ENCODE measurements at regions of chr2 and their contacts with region 1.

Region 1: GRCh38 chr2:168455648-168456520 is at the start of gene CERS6:
- DNase-seq: peak; percentile 5
- ATAC-seq: peak; percentile 98
- H3K4me3 ChIP-seq: peak within 1 kb of the TSS; percentile 75 to 85
- H3K27ac ChIP-seq: peak within 1 kb of the TSS; percentile 81
- H3K4me1 ChIP-seq: peaks cover 17% of the 10 kb centered on the region
- H3K27me3 ChIP-seq: no peaks in the 10 kb centered on the region
- CTCF ChIP-seq: no peak
- total RNA-seq, gene CERS6: 30.3 TPM

Region 2: DNA sequence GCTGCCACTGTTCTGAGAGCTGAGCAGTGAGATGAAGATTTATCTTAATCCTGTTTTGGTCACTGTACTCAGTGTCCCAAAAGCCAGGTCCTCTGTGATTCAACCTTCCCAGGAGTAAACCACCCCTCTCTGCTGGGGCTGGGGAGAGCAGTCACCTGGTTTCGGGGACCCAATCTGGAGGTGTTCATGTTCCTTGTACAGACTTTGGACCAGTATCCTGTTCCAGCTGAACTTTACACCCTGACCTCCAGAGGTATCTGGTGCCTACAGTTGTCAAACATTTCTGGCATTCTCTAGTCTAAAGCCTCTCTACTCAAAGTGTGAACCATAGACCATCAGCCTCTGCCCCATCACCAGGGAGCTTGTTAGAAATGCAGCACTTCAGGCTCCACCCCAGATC is 22.3 kb after region 1 on chr2:
- CTCF ChIA-PET with region 1: interaction called, 11 read pairs
- POLR2A ChIA-PET with region 1: no interaction called
- in situ Hi-C with region 1: no loop called
- intact Hi-C with region 1: no loop called
- DNase-seq: no peak
- ATAC-seq: no peak
- H3K4me3 ChIP-seq: no peak overlapping the region
- H3K27ac ChIP-seq: no peak overlapping the region
- H3K4me1 ChIP-seq: no peaks in the 10 kb centered on the region
- H3K27me3 ChIP-seq: no peaks in the 10 kb centered on the region
- CTCF ChIP-seq: no peak

Region 3: GRCh38 chr2:168758970-168759820 is 303.3 kb after region 1 on chr2:
- CTCF ChIA-PET with region 1: no interaction called
- POLR2A ChIA-PET with region 1: no interaction called
- in situ Hi-C with region 1: no loop called
- intact Hi-C with region 1: loop called (anchors 10 kb)
- DNase-seq: no peak
- ATAC-seq: peak; percentile 94
- H3K4me3 ChIP-seq: no peak overlapping the region
- H3K27ac ChIP-seq: no peak overlapping the region
- H3K4me1 ChIP-seq: no peaks in the 10 kb centered on the region
- H3K27me3 ChIP-seq: no peaks in the 10 kb centered on the region
- CTCF ChIP-seq: peak; percentile 71

Measured in Panc1 (cell line).